CD14-positive monocyte (primary cell): ENCODE measurements at regions of chr3 and their contacts with region 1.

Region 1: GRCh38 chr3:88058591-88059368 is at the starts of genes CGGBP1 and ZNF654:
- DNase-seq: peak; percentile 98 to 99 (median 99)
- H3K4me3 ChIP-seq: peak within 1 kb of the TSS; percentile 78 to 96 (median 93)
- H3K4me3 Mint-ChIP-seq: peak within 1 kb of the TSS; percentile 98 to 99
- H3K27ac ChIP-seq: peak within 1 kb of the TSS; percentile 89 to 96
- H3K27ac Mint-ChIP-seq: peak within 1 kb of the TSS; percentile 96 to 99 (median 98)
- H3K4me1 ChIP-seq: peaks cover 25 to 45% of the 10 kb centered on the region in 2 donors
- H3K4me1 Mint-ChIP-seq: peaks cover 39% of the 10 kb centered on the region
- H3K27me3 ChIP-seq: no peaks in the 10 kb centered on the region
- H3K27me3 Mint-ChIP-seq: no peaks in the 10 kb centered on the region
- CTCF ChIP-seq: no peak
- polyA plus RNA-seq, gene CGGBP1: 61.0 to 82.4 (median 68.7) TPM
- polyA plus RNA-seq, gene ZNF654: 3.0 to 7.2 (median 4.8) TPM

Region 2: DNA sequence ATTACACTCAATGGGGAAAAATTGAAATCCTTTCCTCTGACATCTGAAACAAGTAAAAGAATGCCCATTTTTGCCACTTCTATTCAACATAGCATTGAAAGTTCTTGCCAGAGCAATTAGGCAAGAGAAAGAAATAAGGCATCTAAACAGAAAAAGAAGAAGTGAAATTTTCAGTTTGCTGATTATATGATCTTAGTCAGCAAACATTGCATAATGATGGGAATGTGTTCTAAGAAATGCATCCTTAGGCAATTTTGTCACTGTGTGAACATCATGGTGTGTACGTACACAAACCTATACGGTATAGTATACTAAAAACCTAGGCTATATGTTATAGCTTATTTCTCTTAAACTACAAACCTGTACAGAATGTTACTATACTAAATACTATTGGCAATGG is 278.0 kb before region 1 on chr3:
- intact Hi-C with region 1: loop called in 1 of 2 experiments (anchors 5 kb)
- DNase-seq: peak; percentile 72 to 97 (median 89)
- H3K4me3 ChIP-seq: peak overlapping the region in 1 of 3 experiments; percentile 9
- H3K4me3 Mint-ChIP-seq: no peak overlapping the region
- H3K27ac ChIP-seq: peak overlapping the region in 1 of 2 donors; percentile 67
- H3K27ac Mint-ChIP-seq: peak overlapping the region; percentile 58 to 85 (median 69)
- H3K4me1 ChIP-seq: peaks cover 9 to 25% of the 10 kb centered on the region in 2 donors
- H3K4me1 Mint-ChIP-seq: peaks cover 24% of the 10 kb centered on the region
- H3K27me3 ChIP-seq: no peaks in the 10 kb centered on the region
- H3K27me3 Mint-ChIP-seq: no peaks in the 10 kb centered on the region
- CTCF ChIP-seq: no peak

Region 3: GRCh38 chr3:88113311-88114162 is 54.8 kb after region 1 on chr3:
- intact Hi-C with region 1: loop called in 1 of 2 experiments (anchors 10 kb)
- DNase-seq: peak; percentile 51 to 66 (median 61)
- H3K4me3 ChIP-seq: no peak overlapping the region
- H3K4me3 Mint-ChIP-seq: no peak overlapping the region
- H3K27ac ChIP-seq: no peak overlapping the region
- H3K27ac Mint-ChIP-seq: no peak overlapping the region
- H3K4me1 ChIP-seq: peaks cover 2 to 11% of the 10 kb centered on the region in 2 donors
- H3K4me1 Mint-ChIP-seq: peaks cover 8% of the 10 kb centered on the region
- H3K27me3 ChIP-seq: no peaks in the 10 kb centered on the region
- H3K27me3 Mint-ChIP-seq: no peaks in the 10 kb centered on the region
- CTCF ChIP-seq: peak; percentile 87

Region 4: DNA sequence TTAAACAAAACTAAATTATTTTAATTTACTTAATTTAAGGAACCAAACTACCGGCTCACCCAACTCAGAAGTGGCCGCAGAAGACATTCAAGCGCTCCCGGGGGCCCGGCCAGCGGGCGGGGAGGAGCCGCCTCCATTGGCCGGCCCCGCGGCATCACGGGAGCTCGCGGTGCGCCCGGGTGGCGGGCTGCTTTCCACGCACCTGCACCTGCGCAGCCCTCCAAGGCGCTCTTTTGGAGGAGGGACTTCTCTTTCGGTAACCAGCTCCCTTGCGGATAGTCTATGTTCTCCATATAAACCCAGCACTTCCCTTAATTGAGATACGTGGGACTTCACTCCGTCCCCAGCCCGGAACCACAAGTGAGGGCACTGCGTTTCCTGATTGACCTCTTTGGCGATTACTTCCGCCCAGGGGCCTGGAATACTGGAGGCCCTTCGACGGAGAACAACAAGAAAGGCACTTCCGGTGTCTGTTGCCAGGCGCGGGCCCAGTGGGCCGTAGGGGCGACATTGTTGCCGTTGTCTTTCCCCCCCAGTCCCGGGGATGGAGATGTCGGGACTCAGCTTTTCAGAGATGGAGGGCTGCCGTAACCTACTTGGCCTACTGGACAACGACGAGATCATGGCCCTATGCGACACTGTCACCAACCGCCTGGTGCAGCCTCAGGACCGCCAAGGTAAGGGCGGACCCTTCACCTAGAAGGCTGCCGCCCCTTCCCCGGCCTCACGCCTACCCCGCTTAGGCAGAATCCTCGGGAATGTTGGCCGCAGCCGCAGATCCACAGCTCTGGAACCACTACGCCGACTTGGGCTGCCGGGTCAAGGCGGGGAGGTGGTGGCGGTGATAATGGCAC is 91.0 kb after region 1 on chr3 and contains the start of gene C3orf38:
- intact Hi-C with region 1: loop called (anchors 5 kb)
- DNase-seq: peak; percentile 84 to 89 (median 87)
- H3K4me3 ChIP-seq: peak within 1 kb of the TSS; percentile 86 to 100 (median 95)
- H3K4me3 Mint-ChIP-seq: peak within 1 kb of the TSS; percentile 93 to 97
- H3K27ac ChIP-seq: peak within 1 kb of the TSS; percentile 92 to 98
- H3K27ac Mint-ChIP-seq: peak within 1 kb of the TSS; percentile 93 to 98 (median 95)
- H3K4me1 ChIP-seq: peaks cover 30 to 38% of the 10 kb centered on the region in 2 donors
- H3K4me1 Mint-ChIP-seq: peaks cover 42% of the 10 kb centered on the region
- H3K27me3 ChIP-seq: no peaks in the 10 kb centered on the region
- H3K27me3 Mint-ChIP-seq: peaks cover 0 to 2% (median 0%) of the 10 kb centered on the region in 3 donors
- CTCF ChIP-seq: no peak
- polyA plus RNA-seq, gene C3orf38: 9.1 to 25.4 (median 24.9) TPM

Region 5: DNA sequence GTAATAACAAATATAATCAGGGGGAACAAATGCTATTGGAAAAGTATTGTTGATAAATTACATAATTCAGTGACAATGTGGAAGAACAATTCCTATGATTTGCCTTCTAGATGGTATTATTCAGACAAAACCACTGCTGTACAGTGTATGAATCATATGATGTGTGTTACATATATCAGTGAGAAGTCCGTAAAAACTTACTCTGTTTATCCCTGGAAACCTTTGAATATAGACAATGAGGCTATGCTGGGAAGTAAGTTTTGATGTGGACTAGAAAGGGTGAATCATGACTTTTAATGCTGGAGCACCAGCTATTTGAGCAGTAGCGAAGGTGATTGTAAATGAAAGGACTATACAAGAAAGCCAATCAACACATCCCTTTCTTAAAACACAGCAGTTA is 108.9 kb after region 1 on chr3:
- intact Hi-C with region 1: no loop called
- DNase-seq: no peak
- H3K4me3 ChIP-seq: no peak overlapping the region
- H3K4me3 Mint-ChIP-seq: no peak overlapping the region
- H3K27ac ChIP-seq: no peak overlapping the region
- H3K27ac Mint-ChIP-seq: peak overlapping the region in 1 of 7 donors; percentile 13
- H3K4me1 ChIP-seq: no peaks in the 10 kb centered on the region
- H3K4me1 Mint-ChIP-seq: no peaks in the 10 kb centered on the region
- H3K27me3 ChIP-seq: no peaks in the 10 kb centered on the region
- H3K27me3 Mint-ChIP-seq: no peaks in the 10 kb centered on the region
- CTCF ChIP-seq: no peak